ENCODE measurements at regions of chr2 and their contacts with region 1.

Region 1: DNA sequence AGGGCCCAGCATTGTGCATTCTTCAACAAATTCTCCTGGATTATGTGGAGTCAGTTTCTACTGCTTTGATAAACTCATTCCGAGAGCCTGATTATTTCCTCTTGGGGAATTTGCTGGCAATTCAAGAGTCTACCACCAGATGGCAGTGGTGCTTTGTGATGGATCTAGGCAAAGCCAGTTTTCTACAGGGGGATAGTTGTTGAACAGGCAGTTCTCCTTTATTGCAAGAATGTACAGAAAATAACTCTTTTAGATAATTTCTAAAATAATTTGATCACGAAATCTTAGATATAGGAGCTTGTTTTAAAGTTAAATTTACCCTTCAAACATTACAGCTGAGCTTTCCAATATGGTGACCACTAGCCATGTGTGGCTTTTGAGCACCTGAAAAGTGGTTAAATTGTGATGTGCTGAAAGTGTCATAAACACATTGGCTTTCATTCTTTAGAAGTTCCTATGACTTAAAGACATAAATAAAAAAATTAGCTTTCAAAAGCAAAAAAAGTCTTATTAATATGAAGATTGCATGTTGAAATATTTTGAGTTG is 66.7 kb upstream of the HAAO start:
- DNase-seq: peak; percentile 24
- H3K4me3 ChIP-seq: no peak overlapping the region
- CTCF ChIP-seq: peak; percentile 72

Region 2: GRCh38 chr2:42086500-42086953 is 772.6 kb before region 1 on chr2:
- CTCF ChIA-PET with region 1: no interaction called
- POLR2A ChIA-PET with region 1: no interaction called
- DNase-seq: no peak
- H3K4me3 ChIP-seq: no peak overlapping the region
- CTCF ChIP-seq: peak; percentile 57

Region 3: DNA sequence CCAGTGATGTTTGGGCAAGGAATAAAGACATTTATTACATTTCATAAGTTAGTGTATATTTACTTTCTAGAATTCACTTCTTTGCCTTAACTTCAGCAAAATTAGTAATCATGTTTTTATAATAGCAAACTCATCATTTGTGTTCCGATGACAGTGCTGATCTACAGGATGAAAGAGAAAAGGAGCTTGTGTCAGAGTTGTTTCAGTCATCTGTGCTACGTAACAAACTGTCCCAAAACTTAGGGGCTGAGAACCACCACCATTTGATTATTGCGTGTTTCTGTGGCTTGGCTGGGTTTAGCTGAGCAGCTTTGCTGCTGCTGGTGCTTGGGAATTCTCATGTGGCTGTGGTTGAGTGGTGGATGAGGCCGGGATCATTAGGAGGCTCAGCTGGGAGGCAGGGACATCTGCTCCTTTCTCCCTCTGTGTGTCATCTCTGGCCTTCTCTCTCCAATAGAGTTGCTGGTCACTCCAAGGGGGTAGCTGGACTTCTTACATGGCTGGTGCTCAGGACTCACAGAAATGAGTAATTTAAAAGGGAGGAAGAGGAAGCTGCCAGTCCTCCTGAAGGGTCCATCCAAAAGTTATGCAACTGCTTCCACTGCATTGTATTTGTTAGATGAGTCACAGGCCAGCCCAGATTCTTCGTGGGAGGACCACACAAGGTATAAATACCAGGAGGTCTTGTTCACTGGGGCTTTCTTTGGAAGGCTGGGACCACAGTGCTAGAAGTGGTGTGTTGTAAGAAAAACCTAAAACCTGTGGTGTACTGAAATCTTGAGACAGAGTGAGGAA is 23.3 kb before region 1 on chr2:
- CTCF ChIA-PET with region 1: interaction called, 42 read pairs
- POLR2A ChIA-PET with region 1: interaction called, 4 read pairs
- DNase-seq: peak; percentile 94
- H3K4me3 ChIP-seq: no peak overlapping the region
- CTCF ChIP-seq: no peak

Region 4: GRCh38 chr2:42878581-42878980 is 19.5 kb after region 1 on chr2:
- CTCF ChIA-PET with region 1: interaction called, 30 read pairs
- POLR2A ChIA-PET with region 1: no interaction called
- DNase-seq: no peak
- H3K4me3 ChIP-seq: no peak overlapping the region
- CTCF ChIP-seq: no peak

Region 5: GRCh38 chr2:42939411-42940206 is 80.5 kb after region 1 on chr2:
- CTCF ChIA-PET with region 1: interaction called, 95 read pairs
- POLR2A ChIA-PET with region 1: no interaction called
- DNase-seq: no peak
- H3K4me3 ChIP-seq: no peak overlapping the region
- CTCF ChIP-seq: no peak

Region 6: GRCh38 chr2:42964439-42965083 is 105.5 kb after region 1 on chr2:
- CTCF ChIA-PET with region 1: interaction called, 15 read pairs
- POLR2A ChIA-PET with region 1: no interaction called
- DNase-seq: peak; percentile 81
- H3K4me3 ChIP-seq: no peak overlapping the region
- CTCF ChIP-seq: no peak